Calu3 (cell line): ENCODE measurements at regions of chr6 and their contacts with region 1.

Region 1: GRCh38 chr6:36912586-36912985 is 26.8 kb downstream of the C6orf89 start:
- DNase-seq: no peak
- H3K4me3 Mint-ChIP-seq: no peak overlapping the region
- H3K27ac Mint-ChIP-seq: peak overlapping the region; percentile 28
- H3K4me1 Mint-ChIP-seq: peaks cover 51% of the 10 kb centered on the region
- H3K27me3 Mint-ChIP-seq: no peaks in the 10 kb centered on the region
- CTCF ChIP-seq: no peak

Region 2: GRCh38 chr6:36885461-36886401 is 26.9 kb before region 1 on chr6 and contains the start of gene C6orf89:
- CTCF ChIA-PET with region 1: interaction called, 14 read pairs
- intact Hi-C with region 1: loop called (anchors 1 kb)
- DNase-seq: peak; percentile 96
- H3K4me3 Mint-ChIP-seq: peak within 1 kb of the TSS; percentile 77
- H3K27ac Mint-ChIP-seq: peak within 1 kb of the TSS; percentile 74
- H3K4me1 Mint-ChIP-seq: peaks cover 21% of the 10 kb centered on the region
- H3K27me3 Mint-ChIP-seq: no peaks in the 10 kb centered on the region
- CTCF ChIP-seq: peak; percentile 90
- total RNA-seq, gene C6orf89: 58.3 and 61.1 TPM in 2 replicates

Region 3: GRCh38 chr6:36985808-36986703 is 73.5 kb after region 1 on chr6 and contains the start of gene MTCH1:
- CTCF ChIA-PET with region 1: interaction called, 11 read pairs
- intact Hi-C with region 1: loop called (anchors 10 kb)
- DNase-seq: peak; percentile 95
- H3K4me3 Mint-ChIP-seq: no peak within 1 kb of the TSS
- H3K27ac Mint-ChIP-seq: peak within 1 kb of the TSS; percentile 85
- H3K4me1 Mint-ChIP-seq: peaks cover 28% of the 10 kb centered on the region
- H3K27me3 Mint-ChIP-seq: peaks cover 9% of the 10 kb centered on the region
- CTCF ChIP-seq: no peak
- total RNA-seq, gene MTCH1: 288 and 291 TPM in 2 replicates